Head of caudate nucleus (tissue), 42 donors: ENCODE measurements at regions of chr18 and their contacts with region 1.

Region 1: DNA sequence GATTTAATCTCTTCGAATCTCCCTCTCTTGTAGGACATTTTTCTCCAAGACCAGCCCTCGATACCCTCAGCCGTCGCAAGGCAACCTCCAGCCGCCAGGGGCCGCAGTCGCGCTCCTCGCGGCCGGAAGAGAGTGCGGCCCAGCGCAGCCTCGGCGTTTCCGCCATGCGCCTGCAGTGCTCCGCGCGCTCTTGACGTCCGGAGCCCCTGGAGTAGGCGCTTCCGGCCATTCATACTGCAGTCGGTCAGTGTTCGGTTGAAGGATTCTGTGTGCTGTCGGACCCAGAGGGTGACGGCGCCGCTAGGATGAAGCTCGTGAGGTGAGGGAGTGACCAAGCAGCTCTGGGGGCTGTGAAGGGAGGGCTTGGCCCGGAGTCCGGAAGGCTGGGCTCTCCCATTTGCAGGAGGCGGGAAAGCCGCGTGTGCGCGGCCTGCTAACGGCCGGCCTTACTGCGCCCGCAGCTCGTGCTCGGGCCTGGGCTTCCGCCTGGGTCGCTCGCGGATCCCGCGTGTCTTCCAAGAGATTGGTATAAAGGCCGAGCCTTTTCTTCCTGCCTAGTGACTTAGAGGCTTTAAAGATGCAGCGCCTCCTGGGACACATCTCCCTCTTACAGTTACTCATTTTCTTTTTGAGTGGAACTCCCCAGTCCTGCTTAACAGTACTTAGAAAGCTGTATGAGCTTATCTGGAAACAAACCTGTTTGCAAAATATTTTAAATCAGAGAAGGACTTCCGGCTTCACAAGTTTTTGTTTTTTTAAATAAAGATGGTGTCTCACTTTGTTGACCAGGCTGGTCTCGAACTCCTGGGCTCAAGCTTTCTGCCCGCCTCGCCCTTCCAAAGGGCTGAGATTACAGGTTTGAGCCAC is at the start of gene SNRPD1:
- DNase-seq: peak; percentile 40 to 94 (median 87)

Region 2: DNA sequence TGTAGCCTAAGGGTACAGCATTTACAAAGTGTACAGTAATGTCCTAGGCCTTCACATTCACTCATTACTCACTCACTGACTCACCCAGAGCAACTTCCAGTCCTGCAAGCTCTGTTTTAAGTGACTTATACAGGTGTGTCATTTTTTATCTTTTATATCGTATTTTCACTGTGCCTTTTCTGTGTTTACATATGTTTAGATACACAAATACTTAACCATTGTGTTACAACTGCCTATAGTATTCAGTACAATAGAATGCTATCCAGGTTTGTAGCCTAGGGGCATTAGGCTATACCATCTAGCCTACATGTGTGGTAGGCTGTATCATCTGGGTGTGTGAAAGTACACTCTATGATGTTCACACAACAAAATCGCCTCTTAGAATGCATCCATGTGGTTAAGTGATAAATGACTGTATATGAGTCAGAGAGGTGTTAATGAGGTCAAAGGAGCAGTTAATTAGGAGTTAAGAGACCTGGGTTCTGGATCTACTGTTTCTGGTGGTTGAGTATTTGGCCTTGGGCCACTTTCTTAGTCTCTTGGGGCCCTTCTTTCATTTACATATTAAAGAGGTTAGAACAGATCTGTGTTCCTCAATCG is 221.2 kb before region 1 on chr18:
- intact Hi-C with region 1: no loop called
- DNase-seq: no peak

Region 3: GRCh38 chr18:21538230-21538629 is 74.1 kb before region 1 on chr18:
- intact Hi-C with region 1: loop called (anchors 10 kb)
- DNase-seq: no peak

Region 4: GRCh38 chr18:21704603-21705364 is 92.4 kb after region 1 on chr18 and contains the start of gene ABHD3:
- intact Hi-C with region 1: loop called (anchors 10 kb)
- DNase-seq: peak; percentile 78 to 96 (median 92)

Region 5: GRCh38 chr18:21740724-21741510 is 128.6 kb after region 1 on chr18 and contains the start of gene MIB1:
- intact Hi-C with region 1: loop called (anchors 5 kb)
- DNase-seq: peak in 40 of 42 donors; percentile 35 to 99 (median 68)